Activated CD4-positive, alpha-beta T cell treated with anti-CD3 and anti-CD28 coated beads for 36 hours (primary cell): ENCODE measurements at regions of chr16 and their contacts with region 1.

Region 1: GRCh38 chr16:22123146-22123545 is 30.8 kb downstream of the VWA3A start:
- DNase-seq: no peak
- ATAC-seq: no peak
- H3K4me3 Mint-ChIP-seq: no peak overlapping the region
- H3K27ac Mint-ChIP-seq: no peak overlapping the region
- H3K4me1 Mint-ChIP-seq: no peaks in the 10 kb centered on the region
- H3K27me3 Mint-ChIP-seq: peaks cover 8% of the 10 kb centered on the region

Region 2: DNA sequence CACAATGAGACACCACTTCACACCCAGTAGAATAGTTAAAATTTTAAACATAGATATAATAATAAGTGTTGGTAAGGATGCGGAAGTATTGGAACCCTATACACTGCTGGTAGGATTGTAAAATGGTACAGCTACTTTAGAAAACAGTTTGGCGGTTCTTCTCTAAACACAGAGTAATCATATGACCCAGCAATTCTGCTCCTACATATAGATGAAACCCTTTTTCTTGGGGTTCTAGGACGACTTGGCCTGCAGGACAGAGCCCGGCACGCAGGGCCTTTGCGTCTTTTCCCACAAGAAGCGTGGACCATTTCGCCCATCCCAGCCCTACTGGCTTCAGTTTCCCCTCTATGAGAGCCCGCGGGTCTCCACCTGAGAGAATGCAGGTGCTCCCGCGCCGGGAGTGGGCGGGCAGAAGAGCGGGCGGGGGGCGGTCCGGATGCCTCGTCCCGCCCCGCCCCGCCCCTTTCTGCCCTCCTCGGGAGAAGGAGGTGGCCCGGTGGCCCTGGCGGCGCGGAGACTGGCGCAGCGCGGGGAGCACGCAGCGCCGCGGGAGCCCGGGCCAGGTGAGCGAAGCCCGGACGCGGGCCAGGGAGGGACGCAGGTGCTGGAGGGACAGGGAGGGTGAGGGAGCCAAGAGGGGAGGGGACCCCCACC is 39.0 kb after region 1 on chr16 and contains the start of gene SDR42E2:
- CTCF ChIA-PET with region 1: no interaction called
- POLR2A ChIA-PET with region 1: no interaction called
- intact Hi-C with region 1: loop called in 1 of 2 experiments (anchors 2 kb)
- DNase-seq: peak; percentile 67
- ATAC-seq: peak; percentile 85
- H3K4me3 Mint-ChIP-seq: no peak within 1 kb of the TSS
- H3K27ac Mint-ChIP-seq: no peak within 1 kb of the TSS
- H3K4me1 Mint-ChIP-seq: peaks cover 6% of the 10 kb centered on the region
- H3K27me3 Mint-ChIP-seq: peaks cover 10% of the 10 kb centered on the region
- total RNA-seq, gene SDR42E2: 0.07 TPM in 1 of 2 experiments, not detected in the other

Region 3: DNA sequence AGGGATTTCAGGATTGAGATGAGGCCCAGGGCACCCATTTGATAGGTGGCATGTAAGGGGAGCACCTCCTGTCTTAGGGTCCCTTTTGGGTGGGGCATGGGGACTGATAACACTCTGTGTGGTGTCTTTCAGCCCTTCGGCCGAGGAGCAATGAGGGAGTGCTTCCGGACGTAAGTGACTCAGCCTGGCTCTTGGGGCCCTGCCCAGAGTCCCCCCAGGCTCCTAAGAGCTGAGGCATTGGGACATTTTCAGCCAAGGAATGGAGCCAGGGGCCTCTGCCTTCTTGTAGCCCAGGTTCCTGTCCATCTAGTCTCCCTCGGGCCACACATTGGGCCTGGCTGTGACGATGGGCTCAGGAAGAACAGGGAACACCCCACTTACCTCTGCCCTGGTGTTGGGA is 127.4 kb after region 1 on chr16:
- CTCF ChIA-PET with region 1: no interaction called
- POLR2A ChIA-PET with region 1: no interaction called
- intact Hi-C with region 1: no loop called
- DNase-seq: no peak
- ATAC-seq: no peak
- H3K4me3 Mint-ChIP-seq: no peak overlapping the region
- H3K27ac Mint-ChIP-seq: no peak overlapping the region
- H3K4me1 Mint-ChIP-seq: no peaks in the 10 kb centered on the region
- H3K27me3 Mint-ChIP-seq: no peaks in the 10 kb centered on the region

Region 4: GRCh38 chr16:22264786-22265185 is 141.6 kb after region 1 on chr16:
- CTCF ChIA-PET with region 1: no interaction called
- POLR2A ChIA-PET with region 1: no interaction called
- intact Hi-C with region 1: no loop called
- DNase-seq: no peak
- ATAC-seq: no peak
- H3K4me3 Mint-ChIP-seq: no peak overlapping the region
- H3K27ac Mint-ChIP-seq: no peak overlapping the region
- H3K4me1 Mint-ChIP-seq: peaks cover 22% of the 10 kb centered on the region
- H3K27me3 Mint-ChIP-seq: no peaks in the 10 kb centered on the region